Natural killer cell (primary cell): ENCODE measurements at regions of chr1 and their contacts with region 1.

Region 1: DNA sequence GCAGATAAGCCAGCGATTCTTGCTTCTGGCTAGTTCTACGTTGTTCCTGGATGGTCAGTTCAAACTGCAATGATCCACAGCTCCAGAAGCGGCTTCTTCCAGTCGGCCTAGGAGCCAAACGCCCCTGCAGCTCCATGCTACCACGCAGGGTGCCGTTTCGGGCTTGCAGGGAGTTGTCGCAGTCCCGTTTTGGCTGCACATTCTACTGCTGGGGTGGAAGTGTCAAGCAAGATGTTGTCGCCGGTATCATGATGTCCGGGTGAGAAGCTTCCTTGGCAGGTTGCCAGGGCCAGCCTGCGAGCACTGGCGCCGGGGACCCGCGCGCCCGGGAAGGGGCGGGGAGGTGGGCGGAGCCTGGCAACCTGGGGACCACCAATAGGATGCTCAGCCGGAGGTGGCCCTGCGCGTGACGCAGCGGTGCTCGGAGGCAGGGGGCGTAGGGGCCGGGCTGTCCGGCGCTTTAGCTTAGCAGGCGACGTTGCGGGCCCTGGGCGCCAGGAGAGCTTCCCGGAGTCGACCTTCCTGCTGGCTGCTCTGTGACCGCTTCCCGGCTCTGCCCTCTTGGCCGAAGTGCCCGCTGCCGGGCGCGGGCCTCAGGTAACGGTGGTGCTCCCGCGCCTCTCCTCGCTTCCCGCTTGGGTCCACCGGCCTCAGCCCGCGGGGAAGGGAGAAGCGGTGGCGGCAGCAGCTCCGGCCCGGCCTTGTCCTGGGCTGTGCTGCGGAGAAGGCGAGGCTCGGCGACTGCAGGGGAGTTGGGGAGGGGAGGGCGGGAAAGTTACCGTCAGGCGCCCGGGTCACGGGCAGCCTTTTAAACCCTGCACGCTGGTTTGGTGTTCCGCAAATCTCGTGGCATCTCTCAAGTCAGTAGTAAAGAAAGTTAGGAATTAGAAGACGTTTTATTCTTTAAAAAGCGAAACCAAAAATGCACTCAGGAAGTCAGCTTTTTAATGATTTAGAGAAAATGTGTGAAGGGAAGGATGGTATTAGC is at the start of gene SOAT1:
- DNase-seq: peak; percentile 93 to 95
- ATAC-seq: peak; percentile 95 to 99 (median 98)
- H3K4me3 ChIP-seq: peak within 1 kb of the TSS; percentile 92
- H3K4me3 Mint-ChIP-seq: peak within 1 kb of the TSS; percentile 98
- H3K27ac ChIP-seq: peak within 1 kb of the TSS; percentile 93
- H3K27ac Mint-ChIP-seq: peak within 1 kb of the TSS; percentile 85 to 97
- H3K4me1 ChIP-seq: peaks cover 28% of the 10 kb centered on the region
- H3K4me1 Mint-ChIP-seq: peaks cover 40 to 46% of the 10 kb centered on the region in 2 donors
- H3K27me3 ChIP-seq: no peaks in the 10 kb centered on the region
- H3K27me3 Mint-ChIP-seq: no peaks in the 10 kb centered on the region
- CTCF ChIP-seq: peak; percentile 8
- total RNA-seq, gene SOAT1: 36.9 to 57.9 (median 51.3) TPM

Region 2: GRCh38 chr1:179025125-179025974 is 268.3 kb before region 1 on chr1 and contains the start of gene FAM20B:
- intact Hi-C with region 1: loop called (anchors 5 kb)
- DNase-seq: peak; percentile 90 to 92
- ATAC-seq: peak; percentile 86 to 96 (median 89)
- H3K4me3 ChIP-seq: peak within 1 kb of the TSS; percentile 67
- H3K4me3 Mint-ChIP-seq: peak within 1 kb of the TSS; percentile 93
- H3K27ac ChIP-seq: peak within 1 kb of the TSS; percentile 95
- H3K27ac Mint-ChIP-seq: peak within 1 kb of the TSS; percentile 84 to 95
- H3K4me1 ChIP-seq: peaks cover 9% of the 10 kb centered on the region
- H3K4me1 Mint-ChIP-seq: peaks cover 43 to 44% of the 10 kb centered on the region in 2 donors
- H3K27me3 ChIP-seq: no peaks in the 10 kb centered on the region
- H3K27me3 Mint-ChIP-seq: peaks cover 5 to 12% of the 10 kb centered on the region in 2 donors
- CTCF ChIP-seq: no peak
- total RNA-seq, gene FAM20B: 27.6 to 35.2 (median 29.0) TPM

Region 3: DNA sequence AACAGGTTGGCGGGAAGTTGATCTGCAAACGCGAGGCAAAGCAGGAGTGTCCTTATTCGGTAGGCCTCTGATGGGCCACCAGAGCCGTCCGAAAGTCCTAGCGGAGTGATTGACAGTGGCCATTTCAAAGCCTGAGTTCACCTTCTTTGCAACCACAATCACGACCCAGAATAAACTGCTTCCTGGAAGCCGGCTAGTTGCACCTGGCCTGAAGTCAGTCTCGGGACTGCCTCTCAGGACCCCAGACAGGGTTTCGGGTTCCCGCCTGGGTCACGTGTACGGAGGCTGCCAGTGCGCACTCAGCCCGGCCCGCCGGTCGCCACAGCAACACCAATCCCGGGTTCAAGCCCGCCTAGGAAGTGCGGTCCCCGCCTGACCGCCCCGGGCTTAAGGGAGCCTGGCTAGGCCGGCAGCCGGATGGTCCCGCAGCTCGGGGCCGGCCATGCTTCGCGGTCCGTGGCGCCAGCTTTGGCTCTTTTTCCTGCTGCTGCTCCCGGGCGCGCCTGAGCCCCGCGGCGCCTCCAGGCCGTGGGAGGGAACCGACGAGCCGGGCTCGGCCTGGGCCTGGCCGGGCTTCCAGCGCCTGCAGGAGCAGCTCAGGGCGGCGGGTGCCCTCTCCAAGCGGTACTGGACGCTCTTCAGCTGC is 211.8 kb before region 1 on chr1 and contains the start of gene TOR3A:
- intact Hi-C with region 1: loop called (anchors 1 kb)
- DNase-seq: peak; percentile 66 to 82
- ATAC-seq: peak; percentile 65 to 84 (median 84)
- H3K4me3 ChIP-seq: peak within 1 kb of the TSS; percentile 84
- H3K4me3 Mint-ChIP-seq: peak within 1 kb of the TSS; percentile 93
- H3K27ac ChIP-seq: peak within 1 kb of the TSS; percentile 86
- H3K27ac Mint-ChIP-seq: peak within 1 kb of the TSS; percentile 91 to 92
- H3K4me1 ChIP-seq: peaks cover 20% of the 10 kb centered on the region
- H3K4me1 Mint-ChIP-seq: peaks cover 12 to 24% of the 10 kb centered on the region in 2 donors
- H3K27me3 ChIP-seq: no peaks in the 10 kb centered on the region
- H3K27me3 Mint-ChIP-seq: no peaks in the 10 kb centered on the region
- CTCF ChIP-seq: no peak
- total RNA-seq, gene TOR3A: 22.7 to 33.3 (median 29.0) TPM

Region 4: DNA sequence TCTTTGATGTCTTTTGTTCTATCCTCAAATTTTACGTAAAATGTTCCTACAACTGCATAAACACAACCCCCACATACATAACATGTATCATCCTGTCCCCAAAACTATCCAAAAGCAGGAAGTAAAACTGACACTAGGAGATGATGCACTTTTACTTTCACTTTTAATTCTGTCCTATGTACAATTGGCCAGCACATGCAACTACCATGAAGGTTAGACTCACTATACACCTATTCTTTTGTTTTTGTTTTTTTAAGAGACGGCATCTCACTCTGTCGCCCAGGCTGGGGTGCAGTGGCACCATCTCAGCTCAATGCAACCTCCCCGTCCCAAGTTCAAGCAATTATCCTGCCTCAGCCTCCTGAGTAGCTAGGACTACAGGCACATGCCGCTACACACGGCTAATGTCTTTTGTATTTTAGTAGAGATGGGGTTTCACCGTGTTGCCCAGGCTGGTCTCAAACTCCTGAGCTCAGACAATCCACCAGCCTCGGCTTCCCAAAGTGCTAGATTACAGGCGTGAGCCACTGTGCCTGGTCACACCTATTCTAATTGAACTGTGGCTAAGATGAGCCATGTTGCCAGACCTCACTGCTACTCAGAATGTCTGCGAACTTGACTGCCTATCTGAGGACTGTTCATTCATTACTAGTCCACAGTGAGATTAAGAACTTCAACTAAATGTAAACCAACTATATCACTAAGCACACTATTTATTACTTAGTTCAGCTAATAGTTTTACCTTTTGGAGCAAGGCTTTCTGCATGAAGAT is 163.7 kb before region 1 on chr1:
- intact Hi-C with region 1: loop called (anchors 5 kb)
- DNase-seq: peak; percentile 19 to 78
- ATAC-seq: peak; percentile 93 to 97 (median 97)
- H3K4me3 ChIP-seq: peak overlapping the region; percentile 32
- H3K4me3 Mint-ChIP-seq: peak overlapping the region; percentile 72
- H3K27ac ChIP-seq: peak overlapping the region; percentile 77
- H3K27ac Mint-ChIP-seq: peak overlapping the region; percentile 76 to 91
- H3K4me1 ChIP-seq: peaks cover 11% of the 10 kb centered on the region
- H3K4me1 Mint-ChIP-seq: peaks cover 6 to 13% of the 10 kb centered on the region in 2 donors
- H3K27me3 ChIP-seq: no peaks in the 10 kb centered on the region
- H3K27me3 Mint-ChIP-seq: no peaks in the 10 kb centered on the region
- CTCF ChIP-seq: no peak